Right ventricle myocardium inferior (tissue), 1 donor: ENCODE measurements at regions of chr2 and their contacts with region 1.

Region 1: DNA sequence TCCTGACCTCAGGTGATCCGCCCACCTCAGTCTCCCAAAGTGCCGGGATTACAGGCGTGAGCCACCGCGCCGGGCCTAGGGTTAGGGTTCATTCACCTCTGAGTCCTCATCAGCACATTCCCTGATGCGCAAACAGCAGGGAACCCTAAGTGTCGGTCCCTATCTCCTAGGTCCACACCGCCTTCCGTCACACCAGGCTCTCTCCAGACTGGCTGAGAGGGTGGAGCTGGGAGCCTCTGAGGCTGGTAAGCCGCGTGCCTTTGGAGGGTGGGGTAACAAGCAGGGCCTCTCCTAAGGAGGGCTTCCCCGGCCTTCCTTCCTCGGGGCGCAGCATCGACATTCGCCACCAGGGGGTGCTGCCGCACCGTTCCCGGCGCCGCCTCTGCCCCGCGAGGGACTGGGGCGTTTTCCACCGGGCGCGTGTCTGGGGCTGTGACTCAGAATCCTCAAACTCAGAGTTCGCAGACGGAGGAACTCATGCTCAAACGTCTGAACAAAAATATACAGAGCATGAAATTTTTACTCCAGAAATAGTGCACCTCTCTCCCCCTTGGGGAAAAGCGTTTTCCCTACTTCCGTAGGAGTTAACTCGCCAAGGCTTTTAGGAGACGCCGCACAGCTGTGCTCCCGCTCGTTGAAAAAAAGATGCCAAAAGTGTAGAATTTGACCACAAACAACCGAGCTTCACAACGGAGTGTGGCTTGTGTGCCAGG is 63.9 kb upstream of the ASAP2 start:
- DNase-seq: peak; percentile 91
- ATAC-seq: peak; percentile 93

Region 2: DNA sequence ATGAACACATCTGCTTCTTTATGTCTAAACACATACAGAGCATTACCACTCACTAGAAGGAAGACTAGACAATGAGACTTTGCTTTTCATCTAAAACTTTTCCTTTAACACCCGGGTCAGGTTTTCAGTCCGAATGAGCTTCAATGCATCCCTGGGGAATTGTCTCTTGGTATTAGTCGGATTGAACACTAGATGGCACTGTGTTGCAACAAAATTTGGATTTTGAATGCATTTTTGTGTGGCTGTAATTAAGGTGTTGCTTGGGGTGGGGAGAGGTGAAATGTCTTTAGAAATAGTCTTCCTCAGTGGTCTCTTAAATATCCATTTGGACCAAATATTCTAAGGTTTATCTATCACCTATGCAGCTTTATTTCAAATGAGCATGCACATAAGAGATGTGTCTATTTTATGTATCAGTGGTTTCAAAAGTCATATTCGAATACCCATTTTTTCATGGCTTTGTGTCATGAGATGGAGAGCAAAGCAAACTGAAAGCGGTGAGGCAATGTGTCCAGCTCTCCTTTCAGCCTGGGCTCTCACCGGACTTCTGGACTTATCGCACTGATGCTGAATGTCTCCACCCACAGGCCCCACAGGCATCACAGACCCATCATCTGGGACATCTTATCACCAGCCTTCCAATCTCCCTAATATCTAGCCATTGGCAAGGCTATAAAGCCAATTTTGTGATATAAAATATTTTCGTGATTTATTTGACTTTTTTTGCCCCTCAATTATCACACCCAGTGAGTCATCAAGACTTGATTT is 1715.2 kb before region 1 on chr2:
- intact Hi-C with region 1: loop called (anchors 5 kb)
- DNase-seq: no peak
- ATAC-seq: no peak

Region 3: GRCh38 chr2:9021563-9022211 is 121.0 kb before region 1 on chr2:
- intact Hi-C with region 1: no loop called
- DNase-seq: no peak
- ATAC-seq: no peak

Region 4: GRCh38 chr2:9191041-9191481 is 48.4 kb after region 1 on chr2:
- intact Hi-C with region 1: loop called (anchors 5 kb)
- DNase-seq: peak; percentile 88
- ATAC-seq: peak; percentile 84

Region 5: GRCh38 chr2:9217838-9218770 is 75.4 kb after region 1 on chr2:
- intact Hi-C with region 1: no loop called
- DNase-seq: no peak
- ATAC-seq: no peak

Region 6: GRCh38 chr2:9333591-9334171 is 191.0 kb after region 1 on chr2:
- intact Hi-C with region 1: loop called (anchors 2 kb)
- DNase-seq: no peak
- ATAC-seq: peak; percentile 84

Region 7: GRCh38 chr2:9423100-9423921 is 280.6 kb after region 1 on chr2 and contains the starts of genes CPSF3 and ITGB1BP1:
- intact Hi-C with region 1: loop called (anchors 1 kb)
- DNase-seq: peak; percentile 98
- ATAC-seq: peak; percentile 97
- total RNA-seq, gene CPSF3: 16.5 TPM
- total RNA-seq, gene ITGB1BP1: 93.1 TPM